Mammary epithelial cell (primary cell): ENCODE measurements at regions of chr2 and their contacts with region 1.

Region 1: DNA sequence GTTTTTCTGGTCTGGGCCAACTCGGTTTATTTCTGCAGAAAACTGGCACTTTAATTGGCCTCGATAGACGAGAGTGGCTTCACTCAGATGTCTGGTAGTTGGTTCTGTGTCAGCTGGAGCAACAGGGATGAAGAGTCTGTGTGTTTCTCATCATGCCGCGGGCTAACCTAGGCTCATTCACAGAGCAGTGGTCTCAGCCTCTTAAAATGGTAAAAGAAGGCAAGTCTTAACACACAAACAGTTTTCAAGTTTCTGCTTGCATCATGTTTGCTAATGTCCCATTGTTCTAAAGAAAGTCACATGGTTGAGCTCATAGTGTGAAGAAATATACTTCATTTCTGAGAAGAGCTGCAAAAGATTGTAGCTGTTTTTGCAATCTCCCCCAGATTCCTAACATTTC is 37.5 kb upstream of the ANXA4 start:
- DNase-seq: peak; percentile 96
- H3K4me3 ChIP-seq: peak overlapping the region in 1 of 3 experiments; percentile 27
- H3K27ac ChIP-seq: peak overlapping the region; percentile 72
- H3K4me1 ChIP-seq: peaks cover 27% of the 10 kb centered on the region
- H3K27me3 ChIP-seq: no peaks in the 10 kb centered on the region
- CTCF ChIP-seq: no peak

Region 2: DNA sequence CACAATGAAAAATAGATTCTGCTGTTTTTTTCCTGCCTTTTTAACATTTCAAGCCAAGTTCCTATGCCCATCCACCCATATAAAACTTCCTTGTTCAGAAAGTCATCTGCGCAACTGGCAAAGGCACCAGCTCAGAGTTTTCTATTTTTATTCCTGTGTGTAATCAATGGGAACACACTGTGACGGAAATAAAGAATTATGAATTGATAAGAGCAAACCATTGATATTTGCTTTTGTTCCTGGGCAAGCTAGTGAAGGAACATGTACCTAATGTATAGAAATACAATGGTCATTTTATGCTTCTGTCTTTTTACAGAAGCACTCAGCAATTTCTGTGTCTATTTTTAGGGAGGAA is 30.2 kb before region 1 on chr2:
- CTCF ChIA-PET with region 1: no interaction called
- dilution Hi-C with region 1: no loop called
- in situ Hi-C with region 1: no loop called
- intact Hi-C with region 1: loop called (anchors 2 kb)
- DNase-seq: no peak
- H3K4me3 ChIP-seq: no peak overlapping the region
- H3K27ac ChIP-seq: no peak overlapping the region
- H3K4me1 ChIP-seq: peaks cover 9% of the 10 kb centered on the region
- H3K27me3 ChIP-seq: no peaks in the 10 kb centered on the region
- CTCF ChIP-seq: no peak

Region 3: GRCh38 chr2:69685321-69686048 is 19.0 kb before region 1 on chr2:
- CTCF ChIA-PET with region 1: no interaction called
- dilution Hi-C with region 1: no loop called
- in situ Hi-C with region 1: no loop called
- intact Hi-C with region 1: no loop called
- DNase-seq: peak; percentile 40
- H3K4me3 ChIP-seq: no peak overlapping the region
- H3K27ac ChIP-seq: no peak overlapping the region
- H3K4me1 ChIP-seq: peaks cover 32% of the 10 kb centered on the region
- H3K27me3 ChIP-seq: no peaks in the 10 kb centered on the region
- CTCF ChIP-seq: no peak

Region 4: GRCh38 chr2:69767034-69767433 is 62.6 kb after region 1 on chr2:
- CTCF ChIA-PET with region 1: no interaction called
- dilution Hi-C with region 1: no loop called
- in situ Hi-C with region 1: no loop called
- intact Hi-C with region 1: no loop called
- DNase-seq: no peak
- H3K4me3 ChIP-seq: no peak overlapping the region
- H3K27ac ChIP-seq: no peak overlapping the region
- H3K4me1 ChIP-seq: peaks cover 49% of the 10 kb centered on the region
- H3K27me3 ChIP-seq: no peaks in the 10 kb centered on the region
- CTCF ChIP-seq: peak in 1 of 2 donors; percentile 1